ENCODE measurements at regions of chr1 and their contacts with region 1.

Region 1: GRCh38 chr1:235513495-235514366 is 9.5 kb upstream of the B3GALNT2 start:
- DNase-seq: no peak
- H3K4me3 Mint-ChIP-seq: no peak overlapping the region
- H3K27ac Mint-ChIP-seq: no peak overlapping the region
- H3K4me1 Mint-ChIP-seq: peaks cover 9% of the 10 kb centered on the region
- H3K27me3 Mint-ChIP-seq: peaks cover 16% of the 10 kb centered on the region

Region 2: DNA sequence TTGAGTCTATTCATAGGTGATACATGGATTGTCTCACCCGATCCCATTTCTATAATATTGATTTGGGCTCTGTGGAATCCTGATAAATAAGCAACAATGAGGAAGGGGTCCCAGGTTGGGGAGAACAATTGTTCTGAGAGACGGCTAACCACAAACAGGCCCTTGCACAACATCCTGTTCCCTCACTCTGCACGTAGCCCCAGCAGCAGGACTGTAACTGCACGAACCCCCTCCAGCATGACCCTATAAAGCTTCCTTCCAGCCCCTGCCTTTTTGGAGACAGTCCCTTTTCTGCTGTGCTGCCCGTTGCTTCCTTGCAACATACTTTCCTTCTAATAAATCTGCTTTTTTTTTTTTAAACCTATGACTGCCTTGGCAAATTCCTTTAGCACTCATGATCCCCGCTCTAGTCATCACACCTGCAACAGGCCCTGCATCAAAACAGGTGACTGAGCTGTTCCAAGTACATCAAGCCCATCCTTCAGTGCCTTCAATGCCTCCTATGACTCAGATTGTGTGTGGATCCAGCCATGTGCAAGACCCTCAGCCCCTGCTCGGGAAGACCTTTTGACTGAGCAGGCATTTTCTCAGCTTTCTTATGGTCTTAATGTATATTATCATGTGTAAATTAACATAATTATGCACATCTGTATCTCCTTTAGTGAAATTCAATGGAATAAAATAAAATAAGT is 54.2 kb after region 1 on chr1:
- intact Hi-C with region 1: no loop called
- DNase-seq: no peak
- H3K4me3 Mint-ChIP-seq: no peak overlapping the region
- H3K27ac Mint-ChIP-seq: peak overlapping the region; percentile 45
- H3K4me1 Mint-ChIP-seq: peaks cover 17% of the 10 kb centered on the region
- H3K27me3 Mint-ChIP-seq: no peaks in the 10 kb centered on the region

Region 3: DNA sequence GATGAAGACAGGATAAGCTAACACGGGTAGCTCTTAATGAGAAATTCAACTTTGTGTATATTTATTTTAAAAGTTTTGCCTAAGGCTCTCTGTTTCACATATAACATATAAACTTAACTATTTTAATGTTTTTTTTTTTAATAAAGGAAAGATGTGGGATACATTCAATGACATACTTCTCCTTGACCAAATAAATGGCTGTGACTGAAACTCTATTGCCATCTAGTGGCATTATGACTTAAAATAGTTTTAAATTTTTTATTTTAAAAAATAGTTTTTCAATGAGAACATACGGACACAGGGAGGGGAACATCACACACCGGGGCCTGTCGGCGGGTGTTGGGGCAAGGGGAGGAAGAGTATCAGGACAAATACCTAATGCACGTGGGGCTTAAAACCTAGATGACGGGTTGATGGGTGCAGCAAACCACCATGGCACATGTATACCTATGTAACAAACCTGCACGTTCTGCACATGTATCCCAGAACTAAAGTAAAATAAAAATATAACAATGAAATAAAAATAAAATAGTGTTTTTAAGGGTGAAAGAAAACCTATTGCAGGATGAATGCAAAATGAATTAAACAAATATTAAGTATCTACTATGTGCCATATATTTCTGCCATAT is 269.5 kb after region 1 on chr1:
- intact Hi-C with region 1: loop called (anchors 2 kb)
- DNase-seq: no peak
- H3K4me3 Mint-ChIP-seq: no peak overlapping the region
- H3K27ac Mint-ChIP-seq: no peak overlapping the region
- H3K4me1 Mint-ChIP-seq: peaks cover 1% of the 10 kb centered on the region
- H3K27me3 Mint-ChIP-seq: no peaks in the 10 kb centered on the region

Measured in activated T-helper 2 cell treated with anti-CD3 and anti-CD28 coated beads, Interferon-gamma antibody, Interleukin-2, Interleukin-4, amounts not matched to agents 10 μg/mL and 5 μg/mL and 100 μg/mL, durations not matched to agents 14 hours and 24 hours and 36 hours (primary cell).